Activated T-helper 2 cell treated with anti-CD3 and anti-CD28 coated beads, Interferon-gamma antibody, Interleukin-2, Interleukin-4, amounts not matched to agents 10 μg/mL and 5 μg/mL and 100 μg/mL, durations not matched to agents 14 hours and 24 hours and 36 hours (primary cell): ENCODE measurements at regions of chr1 and their contacts with region 1.

Region 1: GRCh38 chr1:143652187-143652586 is 319.6 kb downstream of the FAM72C start:
- DNase-seq: no peak
- H3K4me3 Mint-ChIP-seq: no peak overlapping the region
- H3K27ac Mint-ChIP-seq: no peak overlapping the region
- H3K4me1 Mint-ChIP-seq: no peaks in the 10 kb centered on the region
- H3K27me3 Mint-ChIP-seq: peaks cover 70% of the 10 kb centered on the region

Region 2: DNA sequence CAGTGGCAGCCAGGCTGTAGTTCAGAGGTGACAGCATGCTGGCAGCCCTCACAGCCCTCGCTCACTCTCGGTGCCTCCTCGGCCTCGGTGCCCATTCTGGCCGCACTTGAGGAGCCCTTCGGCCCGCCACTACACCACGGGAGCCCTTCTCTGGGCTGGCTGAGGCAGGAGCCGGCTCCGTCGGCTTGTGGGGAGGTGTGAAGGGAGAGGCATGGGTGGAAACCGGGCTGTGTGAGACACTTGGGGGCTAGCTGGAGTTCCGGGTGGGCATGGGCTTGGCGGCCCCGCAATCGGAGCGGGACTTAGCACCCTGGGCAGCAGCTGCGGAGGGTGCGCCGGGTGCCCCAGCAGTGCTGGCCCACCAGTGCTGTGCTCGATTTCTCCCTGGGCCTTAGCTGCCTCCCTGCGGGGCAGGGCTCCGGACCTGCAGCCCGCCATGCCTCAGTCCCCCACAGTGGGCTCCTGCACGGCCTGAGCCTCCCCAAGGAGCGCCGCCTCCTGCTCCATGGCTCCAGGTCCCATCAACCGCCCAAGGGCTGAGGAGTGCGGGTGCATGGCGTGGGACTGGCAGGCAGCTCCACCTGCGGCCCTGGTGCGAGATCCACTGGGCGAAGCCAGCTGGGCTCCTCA is 77.2 kb before region 1 on chr1:
- intact Hi-C with region 1: no loop called
- DNase-seq: no peak
- H3K4me3 Mint-ChIP-seq: no peak overlapping the region
- H3K27ac Mint-ChIP-seq: no peak overlapping the region
- H3K4me1 Mint-ChIP-seq: no peaks in the 10 kb centered on the region
- H3K27me3 Mint-ChIP-seq: no peaks in the 10 kb centered on the region

Region 3: DNA sequence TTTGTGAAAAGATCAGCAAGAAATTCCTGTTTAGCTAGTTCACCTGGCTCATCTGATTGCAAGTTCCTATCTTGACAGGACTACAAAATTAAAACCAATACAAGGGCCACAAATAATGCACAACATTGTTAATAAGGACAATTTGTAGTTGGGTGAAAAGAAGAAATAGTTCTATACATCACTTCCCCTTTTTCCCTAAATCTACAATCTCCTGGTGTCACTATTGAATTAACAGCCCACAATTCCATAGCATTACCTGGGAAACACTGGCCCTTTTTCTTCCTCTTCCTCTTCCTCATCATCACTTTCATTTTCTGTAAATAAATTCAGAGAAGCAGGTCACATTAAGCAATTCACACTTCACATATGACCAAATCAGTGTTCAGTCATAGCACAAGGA is 47.3 kb before region 1 on chr1:
- intact Hi-C with region 1: no loop called
- DNase-seq: no peak
- H3K4me3 Mint-ChIP-seq: no peak overlapping the region
- H3K27ac Mint-ChIP-seq: no peak overlapping the region
- H3K4me1 Mint-ChIP-seq: no peaks in the 10 kb centered on the region
- H3K27me3 Mint-ChIP-seq: no peaks in the 10 kb centered on the region

Region 4: GRCh38 chr1:143698016-143698415 is 45.8 kb after region 1 on chr1:
- intact Hi-C with region 1: loop called (anchors 2 kb)
- DNase-seq: no peak
- H3K4me3 Mint-ChIP-seq: no peak overlapping the region
- H3K27ac Mint-ChIP-seq: no peak overlapping the region
- H3K4me1 Mint-ChIP-seq: peaks cover 9% of the 10 kb centered on the region
- H3K27me3 Mint-ChIP-seq: peaks cover 68% of the 10 kb centered on the region